HEK293 (cell line): ENCODE measurements at regions of chr15 and their contacts with region 1.

Region 1: GRCh38 chr15:90265271-90266060 is at the start of gene NGRN:
- H3K4me3 ChIP-seq: peak within 1 kb of the TSS; percentile 73
- H3K27ac ChIP-seq: peak within 1 kb of the TSS; percentile 89
- H3K4me1 ChIP-seq: peaks cover 10% of the 10 kb centered on the region; the same call in 1 of the 2 replicates
- CTCF ChIP-seq: peak; percentile 12; the same call in 1 of the 2 replicates

Region 2: GRCh38 chr15:89964232-89964954 is 301.1 kb before region 1 on chr15:
- CTCF ChIA-PET with region 1: no interaction called
- POLR2A ChIA-PET with region 1: no interaction called
- H3K4me3 ChIP-seq: no peak overlapping the region
- H3K27ac ChIP-seq: no peak overlapping the region
- H3K4me1 ChIP-seq: no peaks in the 10 kb centered on the region
- CTCF ChIP-seq: no peak

Region 3: GRCh38 chr15:90249203-90249863 is 16.1 kb before region 1 on chr15 and contains the start of gene TTLL13:
- CTCF ChIA-PET with region 1: interaction called, 3 read pairs
- POLR2A ChIA-PET with region 1: interaction called, 26 read pairs
- H3K4me3 ChIP-seq: peak within 1 kb of the TSS; percentile 73
- H3K27ac ChIP-seq: no peak within 1 kb of the TSS
- H3K4me1 ChIP-seq: no peaks in the 10 kb centered on the region; the same call in 1 of the 2 replicates
- CTCF ChIP-seq: peak; percentile 60

Region 4: DNA sequence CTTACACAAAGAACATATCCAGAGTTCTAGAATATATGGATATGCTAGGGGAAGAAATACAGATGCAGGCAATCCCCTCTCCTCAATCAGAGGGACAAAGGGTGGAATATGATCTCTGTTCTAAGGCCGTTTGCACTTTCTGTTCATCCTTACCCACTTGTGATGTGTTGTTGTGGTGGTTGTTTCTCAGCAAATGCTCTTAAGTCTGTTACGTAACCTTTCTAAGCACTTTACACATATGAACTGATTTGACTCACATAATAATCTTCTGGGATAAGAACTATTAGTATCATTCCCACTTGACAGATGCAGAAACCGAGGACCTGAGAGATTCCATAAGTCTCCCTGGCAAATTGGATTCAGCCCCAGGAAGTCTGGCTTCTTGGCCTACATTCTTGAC is 40.5 kb after region 1 on chr15:
- CTCF ChIA-PET with region 1: no interaction called
- POLR2A ChIA-PET with region 1: no interaction called
- H3K4me3 ChIP-seq: no peak overlapping the region
- H3K27ac ChIP-seq: no peak overlapping the region
- H3K4me1 ChIP-seq: no peaks in the 10 kb centered on the region
- CTCF ChIP-seq: no peak

Region 5: DNA sequence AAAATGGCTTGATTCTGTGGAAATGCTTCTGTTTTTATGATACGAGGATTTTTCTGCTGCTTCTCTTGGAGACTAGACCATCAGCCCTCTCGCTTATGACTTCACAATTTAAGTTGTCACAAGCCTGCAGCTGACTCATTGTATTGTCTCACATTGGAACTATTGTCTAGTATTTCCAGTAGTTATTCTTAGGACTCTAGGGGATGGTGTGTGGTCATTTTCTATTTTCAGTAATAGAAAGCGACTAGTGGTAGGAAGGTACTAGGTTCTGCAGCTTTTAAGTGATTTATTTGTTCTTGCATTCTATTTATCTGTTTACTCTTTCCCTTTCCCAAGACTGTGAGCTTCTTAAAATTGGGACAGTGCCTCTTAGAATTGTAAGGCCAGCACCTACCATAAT is 197.9 kb after region 1 on chr15:
- CTCF ChIA-PET with region 1: no interaction called
- POLR2A ChIA-PET with region 1: interaction called, 10 read pairs
- H3K4me3 ChIP-seq: no peak overlapping the region
- H3K27ac ChIP-seq: no peak overlapping the region
- H3K4me1 ChIP-seq: peaks cover 15% of the 10 kb centered on the region
- CTCF ChIP-seq: no peak